HCT116 (cell line): ENCODE measurements at regions of chr18 and their contacts with region 1.

Region 1: DNA sequence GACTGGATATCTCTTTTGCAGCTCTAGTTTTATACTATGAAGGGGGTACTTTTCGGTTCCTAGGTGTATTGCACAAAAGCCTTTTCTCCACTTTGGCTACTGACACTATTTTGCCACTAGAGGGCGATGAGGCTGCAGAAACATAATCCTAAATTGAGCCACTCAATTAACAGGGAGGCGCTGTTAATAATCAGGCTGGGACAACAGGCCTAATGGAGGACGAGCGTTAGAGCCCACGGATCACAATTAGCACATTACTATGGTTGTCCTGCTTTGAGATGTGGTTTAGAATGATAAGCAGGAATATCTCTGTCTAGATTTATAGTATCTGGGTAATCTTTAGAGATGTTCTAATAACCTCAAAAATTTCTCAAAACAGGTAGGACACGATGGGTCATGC is 62.2 kb upstream of the PMAIP1 start:
- DNase-seq: peak; percentile 80
- ATAC-seq: peak; percentile 90
- H3K4me3 ChIP-seq: no peak overlapping the region
- H3K27ac ChIP-seq: no peak overlapping the region
- H3K4me1 ChIP-seq: peaks cover 0 to 6% of the 10 kb centered on the region in 2 experiments; a peak in 1 of 4 replicates
- H3K27me3 ChIP-seq: no peaks in the 10 kb centered on the region
- CTCF ChIP-seq: peak; percentile 84 to 98 (median 96)
- POLR2A ChIP-seq: no peak
- RAD21 ChIP-seq: peak; percentile 94

Region 2: GRCh38 chr18:59788791-59789106 is 48.8 kb before region 1 on chr18:
- CTCF ChIA-PET with region 1: no interaction called
- POLR2A ChIA-PET with region 1: no interaction called
- RAD21 ChIA-PET with region 1: no interaction called
- intact Hi-C with region 1: no loop called
- DNase-seq: no peak
- ATAC-seq: peak; percentile 29
- H3K4me3 ChIP-seq: no peak overlapping the region
- H3K27ac ChIP-seq: no peak overlapping the region
- H3K4me1 ChIP-seq: peaks cover 9 to 21% of the 10 kb centered on the region in 2 experiments
- H3K27me3 ChIP-seq: no peaks in the 10 kb centered on the region
- CTCF ChIP-seq: no peak
- POLR2A ChIP-seq: no peak
- RAD21 ChIP-seq: no peak

Region 3: GRCh38 chr18:59899298-59900221 is 62.0 kb after region 1 on chr18 and contains the start of gene PMAIP1:
- CTCF ChIA-PET with region 1: interaction called, 5 read pairs
- POLR2A ChIA-PET with region 1: interaction called, 16 read pairs
- RAD21 ChIA-PET with region 1: no interaction called
- intact Hi-C with region 1: no loop called
- DNase-seq: peak; percentile 81
- ATAC-seq: peak; percentile 83
- H3K4me3 ChIP-seq: peak within 1 kb of the TSS; percentile 80 to 82
- H3K27ac ChIP-seq: peak within 1 kb of the TSS; percentile 87
- H3K4me1 ChIP-seq: peaks cover 30 to 49% of the 10 kb centered on the region in 2 experiments
- H3K27me3 ChIP-seq: no peaks in the 10 kb centered on the region
- CTCF ChIP-seq: no peak
- POLR2A ChIP-seq: peak; percentile 98
- RAD21 ChIP-seq: no peak
- total RNA-seq, gene PMAIP1: 66.7 TPM

Region 4: GRCh38 chr18:59907172-59907571 is 69.6 kb after region 1 on chr18:
- CTCF ChIA-PET with region 1: interaction called, 3 read pairs
- POLR2A ChIA-PET with region 1: interaction called, 8 read pairs
- RAD21 ChIA-PET with region 1: interaction called in 1 of 2 experiments, 4 read pairs
- intact Hi-C with region 1: loop called (anchors 5 kb)
- DNase-seq: no peak
- ATAC-seq: no peak
- H3K4me3 ChIP-seq: no peak overlapping the region
- H3K27ac ChIP-seq: no peak overlapping the region
- H3K4me1 ChIP-seq: peaks cover 36 to 87% of the 10 kb centered on the region in 2 experiments
- H3K27me3 ChIP-seq: no peaks in the 10 kb centered on the region
- CTCF ChIP-seq: no peak
- POLR2A ChIP-seq: no peak
- RAD21 ChIP-seq: no peak

Region 5: DNA sequence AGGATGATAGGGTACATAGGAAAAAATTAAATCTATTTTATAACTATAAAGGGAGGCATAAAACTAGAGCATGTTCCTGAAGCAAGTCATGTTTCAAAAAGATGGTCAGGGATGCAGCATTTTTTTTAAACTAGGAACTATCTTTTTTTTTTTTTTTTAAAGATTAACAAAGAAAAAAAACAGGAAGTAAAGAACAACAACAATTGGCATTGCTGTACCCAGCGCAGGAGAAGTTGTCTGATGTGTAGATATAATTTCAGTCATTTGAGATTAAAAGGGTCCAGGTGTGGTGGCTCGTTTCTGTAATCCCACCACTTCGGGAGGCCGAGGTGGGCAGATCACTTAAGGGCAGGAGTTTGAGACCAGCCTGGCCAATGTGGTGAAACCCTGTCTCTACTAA is 103.7 kb after region 1 on chr18:
- CTCF ChIA-PET with region 1: no interaction called
- POLR2A ChIA-PET with region 1: no interaction called
- RAD21 ChIA-PET with region 1: no interaction called
- intact Hi-C with region 1: no loop called
- DNase-seq: no peak
- ATAC-seq: no peak
- H3K4me3 ChIP-seq: no peak overlapping the region
- H3K27ac ChIP-seq: no peak overlapping the region
- H3K4me1 ChIP-seq: no peaks in the 10 kb centered on the region
- H3K27me3 ChIP-seq: no peaks in the 10 kb centered on the region
- CTCF ChIP-seq: no peak
- POLR2A ChIP-seq: no peak
- RAD21 ChIP-seq: no peak

Region 6: DNA sequence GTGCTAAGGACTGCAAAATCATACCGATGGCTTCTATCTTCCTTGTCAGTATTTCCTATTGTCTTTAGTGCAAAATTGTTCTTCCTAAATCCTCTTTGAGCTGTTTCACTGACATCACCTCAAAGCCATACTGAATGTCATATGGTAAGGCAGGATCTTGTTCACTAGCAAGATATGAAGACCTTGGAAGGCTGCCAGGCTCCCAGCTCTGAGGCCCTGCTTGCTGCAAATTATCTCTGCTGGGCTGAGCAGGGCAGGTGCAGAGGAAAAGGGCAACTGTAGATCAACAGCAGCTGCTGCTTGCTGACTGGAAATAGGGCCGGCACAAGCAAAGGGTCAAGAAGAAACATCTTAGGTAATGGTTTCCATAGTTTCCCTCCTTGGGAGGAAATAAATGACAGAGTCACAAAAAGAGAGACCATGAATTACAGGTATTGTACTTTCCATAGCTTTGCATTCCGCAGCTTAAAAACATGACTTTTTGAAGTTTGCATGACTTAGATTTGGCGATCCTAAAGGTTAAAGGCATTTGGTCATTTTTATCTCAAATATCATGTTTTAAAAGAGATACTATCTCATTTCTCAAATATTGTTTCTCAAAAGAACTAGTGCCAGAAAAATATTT is 120.5 kb after region 1 on chr18:
- CTCF ChIA-PET with region 1: interaction called, 7 read pairs
- POLR2A ChIA-PET with region 1: interaction called, 3 read pairs
- RAD21 ChIA-PET with region 1: no interaction called
- intact Hi-C with region 1: loop called (anchors 2 kb)
- DNase-seq: peak; percentile 67
- ATAC-seq: peak; percentile 45
- H3K4me3 ChIP-seq: peak overlapping the region in 1 of 2 experiments; percentile 4; a peak in 2 of 4 replicates
- H3K27ac ChIP-seq: peak overlapping the region; percentile 54
- H3K4me1 ChIP-seq: peaks cover 75 to 89% of the 10 kb centered on the region in 2 experiments
- H3K27me3 ChIP-seq: no peaks in the 10 kb centered on the region
- CTCF ChIP-seq: no peak
- POLR2A ChIP-seq: no peak
- RAD21 ChIP-seq: no peak

Region 7: GRCh38 chr18:59988098-59988706 is 150.6 kb after region 1 on chr18:
- CTCF ChIA-PET with region 1: interaction called, 12 read pairs
- POLR2A ChIA-PET with region 1: no interaction called
- RAD21 ChIA-PET with region 1: interaction called in 1 of 2 experiments, 3 read pairs
- intact Hi-C with region 1: loop called (anchors 2 kb)
- DNase-seq: peak; percentile 49
- ATAC-seq: peak; percentile 70
- H3K4me3 ChIP-seq: no peak overlapping the region
- H3K27ac ChIP-seq: no peak overlapping the region
- H3K4me1 ChIP-seq: peaks cover 0 to 31% of the 10 kb centered on the region in 2 experiments; a peak in 3 of 4 replicates
- H3K27me3 ChIP-seq: no peaks in the 10 kb centered on the region
- CTCF ChIP-seq: peak; percentile 66 to 95 (median 90); a peak in 5 of 6 replicates
- POLR2A ChIP-seq: no peak
- RAD21 ChIP-seq: peak; percentile 88

Region 8: GRCh38 chr18:60038731-60039130 is 201.1 kb after region 1 on chr18:
- CTCF ChIA-PET with region 1: no interaction called
- POLR2A ChIA-PET with region 1: no interaction called
- RAD21 ChIA-PET with region 1: no interaction called
- intact Hi-C with region 1: no loop called
- DNase-seq: no peak
- ATAC-seq: no peak
- H3K4me3 ChIP-seq: no peak overlapping the region
- H3K27ac ChIP-seq: no peak overlapping the region
- H3K4me1 ChIP-seq: peaks cover 0 to 2% of the 10 kb centered on the region in 2 experiments; a peak in 2 of 4 replicates
- H3K27me3 ChIP-seq: no peaks in the 10 kb centered on the region
- CTCF ChIP-seq: no peak
- POLR2A ChIP-seq: no peak
- RAD21 ChIP-seq: no peak

Region 9: GRCh38 chr18:60413944-60414547 is 576.5 kb after region 1 on chr18:
- CTCF ChIA-PET with region 1: no interaction called
- POLR2A ChIA-PET with region 1: no interaction called
- RAD21 ChIA-PET with region 1: no interaction called
- intact Hi-C with region 1: loop called (anchors 5 kb)
- DNase-seq: peak; percentile 10
- ATAC-seq: peak; percentile 92
- H3K4me3 ChIP-seq: no peak overlapping the region
- H3K27ac ChIP-seq: no peak overlapping the region
- H3K4me1 ChIP-seq: no peaks in the 10 kb centered on the region
- H3K27me3 ChIP-seq: no peaks in the 10 kb centered on the region
- CTCF ChIP-seq: peak; percentile 62 to 73 (median 68); a peak in 5 of 6 replicates
- POLR2A ChIP-seq: no peak
- RAD21 ChIP-seq: peak; percentile 60

Region 10: GRCh38 chr18:60549338-60549960 is 711.9 kb after region 1 on chr18:
- CTCF ChIA-PET with region 1: interaction called, 4 read pairs
- POLR2A ChIA-PET with region 1: no interaction called
- RAD21 ChIA-PET with region 1: no interaction called
- intact Hi-C with region 1: loop called (anchors 1 kb)
- DNase-seq: peak; percentile 66
- ATAC-seq: no peak
- H3K4me3 ChIP-seq: peak overlapping the region in 1 of 2 experiments; percentile 3; a peak in 1 of 4 replicates
- H3K27ac ChIP-seq: no peak overlapping the region
- H3K4me1 ChIP-seq: no peaks in the 10 kb centered on the region
- H3K27me3 ChIP-seq: no peaks in the 10 kb centered on the region
- CTCF ChIP-seq: peak; percentile 67 to 78 (median 73); a peak in 5 of 6 replicates
- POLR2A ChIP-seq: no peak
- RAD21 ChIP-seq: peak; percentile 87